Activated CD8-positive, alpha-beta T cell treated with anti-CD3 and anti-CD28 coated beads for 36 hours (primary cell): ENCODE measurements at regions of chr13 and their contacts with region 1.

Region 1: GRCh38 chr13:28324181-28324789 is 170.6 kb downstream of the FLT1 start:
- DNase-seq: peak; percentile 73
- ATAC-seq: peak; percentile 87
- H3K4me3 Mint-ChIP-seq: no peak overlapping the region
- H3K27ac Mint-ChIP-seq: no peak overlapping the region
- H3K4me1 Mint-ChIP-seq: peaks cover 4% of the 10 kb centered on the region
- H3K27me3 Mint-ChIP-seq: no peaks in the 10 kb centered on the region
- CTCF ChIP-seq: peak; percentile 75

Region 2: DNA sequence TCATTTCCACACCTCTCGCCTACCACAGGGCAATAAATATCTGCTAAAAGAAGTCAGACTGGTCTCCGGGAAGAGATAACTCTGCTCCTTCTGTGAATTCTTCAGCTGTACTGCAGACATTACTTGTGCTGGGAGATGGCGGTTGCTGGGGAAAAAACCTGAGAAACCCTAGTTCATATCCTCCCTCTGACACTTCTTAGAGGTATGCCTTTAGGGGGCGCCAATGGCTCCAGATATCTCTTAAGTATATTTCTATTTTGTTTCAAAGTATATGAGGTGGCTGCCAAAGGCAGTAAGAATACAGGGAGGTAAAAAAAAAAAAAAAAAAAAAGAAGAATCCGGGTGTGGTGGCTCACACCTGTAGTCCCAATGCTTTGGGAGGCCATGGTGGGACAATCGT is 10.7 kb before region 1 on chr13:
- CTCF ChIA-PET with region 1: interaction called, 15 read pairs
- POLR2A ChIA-PET with region 1: no interaction called
- intact Hi-C with region 1: no loop called
- DNase-seq: peak; percentile 62
- ATAC-seq: peak; percentile 53
- H3K4me3 Mint-ChIP-seq: no peak overlapping the region
- H3K27ac Mint-ChIP-seq: no peak overlapping the region
- H3K4me1 Mint-ChIP-seq: no peaks in the 10 kb centered on the region
- H3K27me3 Mint-ChIP-seq: no peaks in the 10 kb centered on the region
- CTCF ChIP-seq: peak; percentile 42

Region 3: GRCh38 chr13:28636674-28637317 is 312.5 kb after region 1 on chr13:
- CTCF ChIA-PET with region 1: interaction called, 16 read pairs
- POLR2A ChIA-PET with region 1: interaction called, 3 read pairs
- intact Hi-C with region 1: loop called (anchors 5 kb)
- DNase-seq: peak; percentile 81
- ATAC-seq: peak; percentile 94
- H3K4me3 Mint-ChIP-seq: peak overlapping the region; percentile 3
- H3K27ac Mint-ChIP-seq: peak overlapping the region; percentile 11
- H3K4me1 Mint-ChIP-seq: peaks cover 16% of the 10 kb centered on the region
- H3K27me3 Mint-ChIP-seq: peaks cover 3% of the 10 kb centered on the region
- CTCF ChIP-seq: peak; percentile 80

Region 4: GRCh38 chr13:28792992-28793391 is 468.7 kb after region 1 on chr13:
- CTCF ChIA-PET with region 1: interaction called, 21 read pairs
- POLR2A ChIA-PET with region 1: no interaction called
- intact Hi-C with region 1: loop called (anchors 5 kb)
- DNase-seq: no peak
- ATAC-seq: no peak
- H3K4me3 Mint-ChIP-seq: no peak overlapping the region
- H3K27ac Mint-ChIP-seq: no peak overlapping the region
- H3K4me1 Mint-ChIP-seq: no peaks in the 10 kb centered on the region
- H3K27me3 Mint-ChIP-seq: peaks cover 15% of the 10 kb centered on the region
- CTCF ChIP-seq: no peak